ENCODE measurements at regions of chr1 and their contacts with region 1.

Region 1: DNA sequence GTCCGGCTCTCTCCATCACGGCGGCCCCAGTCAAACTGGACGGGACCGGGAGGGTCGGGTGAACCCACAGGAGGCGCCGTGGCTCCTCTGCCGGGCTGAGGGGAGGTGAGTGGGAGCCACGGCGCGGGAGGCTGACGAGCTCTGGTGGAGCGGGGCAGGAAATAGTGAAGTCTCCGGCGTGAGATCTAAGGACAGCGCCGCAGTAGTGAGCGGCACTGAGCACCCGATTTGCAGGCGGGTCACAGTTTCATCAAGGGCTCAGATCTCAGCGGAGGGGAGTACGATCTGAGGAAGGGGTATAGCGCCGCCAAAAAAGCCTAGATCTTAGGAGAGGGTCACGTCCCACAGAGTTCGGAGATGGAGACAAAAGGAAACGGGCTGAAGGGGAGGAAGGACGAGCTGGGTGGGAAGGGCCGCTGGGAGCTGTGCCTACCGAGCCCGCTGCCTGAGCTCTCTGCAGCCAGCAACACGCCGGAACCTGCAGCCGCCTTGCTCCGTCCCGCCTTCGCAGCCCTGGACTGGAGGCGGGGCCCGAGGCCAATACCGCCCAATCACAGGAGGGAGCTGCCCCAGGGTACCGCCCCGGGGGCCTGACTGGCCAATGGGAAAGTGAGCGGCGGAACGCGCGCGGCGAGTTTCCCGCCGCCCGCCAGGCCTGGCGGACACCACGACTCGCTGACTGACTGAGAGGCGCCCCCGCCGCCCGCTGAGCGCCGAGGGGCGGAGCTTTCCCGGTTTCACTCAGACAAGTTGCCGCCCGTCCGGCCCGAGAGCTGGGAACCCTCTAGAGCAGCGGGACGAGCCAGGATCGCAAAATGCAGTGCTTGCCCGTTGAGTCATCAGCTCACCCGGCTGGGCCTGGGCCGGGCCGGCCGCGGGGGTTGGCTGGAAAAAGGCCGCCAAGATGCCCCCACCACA is 1.9 kb downstream of the SFN start:
- DNase-seq: peak; percentile 96
- ATAC-seq: peak; percentile 97
- H3K4me3 Mint-ChIP-seq: peak overlapping the region; percentile 94
- H3K27ac Mint-ChIP-seq: peak overlapping the region; percentile 97
- H3K4me1 Mint-ChIP-seq: peaks cover 40% of the 10 kb centered on the region
- H3K27me3 Mint-ChIP-seq: no peaks in the 10 kb centered on the region

Region 2: DNA sequence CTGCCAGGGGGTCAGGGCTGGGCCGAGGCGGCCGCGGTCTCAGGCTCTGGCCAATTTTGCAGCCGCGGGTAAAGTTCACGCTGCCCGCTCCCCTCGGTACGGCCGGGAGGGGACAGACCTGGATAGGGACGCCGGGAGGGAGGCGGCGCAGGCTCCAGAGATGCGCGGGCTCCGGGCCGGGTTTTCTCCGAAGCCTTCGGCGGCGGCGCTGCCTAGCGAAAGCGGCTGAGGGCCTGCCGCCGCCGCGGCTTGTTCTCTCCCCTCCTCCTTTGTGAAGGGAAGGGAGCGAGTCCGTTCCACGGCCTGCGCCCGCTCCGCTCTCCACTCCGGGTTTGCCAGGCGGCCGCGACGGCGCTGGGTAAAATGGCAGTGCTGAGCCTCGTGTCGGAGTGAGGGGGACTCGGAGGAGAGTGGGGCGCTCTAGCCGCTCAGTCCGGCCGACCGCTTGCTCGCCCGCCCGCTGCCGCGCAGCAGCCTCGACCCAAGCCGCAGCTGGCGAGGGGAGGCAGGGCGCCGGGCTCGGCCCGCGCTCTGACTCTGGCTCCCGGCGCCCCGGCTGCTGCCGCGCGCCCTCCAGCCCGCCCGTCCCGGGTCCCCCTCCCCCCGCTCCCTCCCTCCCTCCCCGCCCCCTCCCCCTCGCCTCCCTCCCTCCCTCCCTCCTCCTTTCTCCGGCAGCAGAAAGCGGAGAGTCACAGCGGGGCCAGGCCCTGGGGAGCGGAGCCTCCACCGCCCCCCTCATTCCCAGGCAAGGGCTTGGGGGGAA is 169.3 kb before region 1 on chr1 and contains the start of gene ARID1A:
- CTCF ChIA-PET with region 1: interaction called, 3 read pairs
- POLR2A ChIA-PET with region 1: interaction called, 12 read pairs
- DNase-seq: peak; percentile 96
- ATAC-seq: peak; percentile 61
- H3K4me3 Mint-ChIP-seq: peak within 1 kb of the TSS; percentile 88
- H3K27ac Mint-ChIP-seq: peak within 1 kb of the TSS; percentile 97
- H3K4me1 Mint-ChIP-seq: peaks cover 33% of the 10 kb centered on the region
- H3K27me3 Mint-ChIP-seq: no peaks in the 10 kb centered on the region
- total RNA-seq, gene ARID1A: 122 to 123 TPM

Region 3: GRCh38 chr1:26811057-26811456 is 53.8 kb before region 1 on chr1:
- CTCF ChIA-PET with region 1: interaction called, 11 read pairs
- POLR2A ChIA-PET with region 1: interaction called, 8 read pairs
- DNase-seq: no peak
- ATAC-seq: no peak
- H3K4me3 Mint-ChIP-seq: no peak overlapping the region
- H3K27ac Mint-ChIP-seq: peak overlapping the region; percentile 74
- H3K4me1 Mint-ChIP-seq: peaks cover 21% of the 10 kb centered on the region
- H3K27me3 Mint-ChIP-seq: no peaks in the 10 kb centered on the region

Region 4: DNA sequence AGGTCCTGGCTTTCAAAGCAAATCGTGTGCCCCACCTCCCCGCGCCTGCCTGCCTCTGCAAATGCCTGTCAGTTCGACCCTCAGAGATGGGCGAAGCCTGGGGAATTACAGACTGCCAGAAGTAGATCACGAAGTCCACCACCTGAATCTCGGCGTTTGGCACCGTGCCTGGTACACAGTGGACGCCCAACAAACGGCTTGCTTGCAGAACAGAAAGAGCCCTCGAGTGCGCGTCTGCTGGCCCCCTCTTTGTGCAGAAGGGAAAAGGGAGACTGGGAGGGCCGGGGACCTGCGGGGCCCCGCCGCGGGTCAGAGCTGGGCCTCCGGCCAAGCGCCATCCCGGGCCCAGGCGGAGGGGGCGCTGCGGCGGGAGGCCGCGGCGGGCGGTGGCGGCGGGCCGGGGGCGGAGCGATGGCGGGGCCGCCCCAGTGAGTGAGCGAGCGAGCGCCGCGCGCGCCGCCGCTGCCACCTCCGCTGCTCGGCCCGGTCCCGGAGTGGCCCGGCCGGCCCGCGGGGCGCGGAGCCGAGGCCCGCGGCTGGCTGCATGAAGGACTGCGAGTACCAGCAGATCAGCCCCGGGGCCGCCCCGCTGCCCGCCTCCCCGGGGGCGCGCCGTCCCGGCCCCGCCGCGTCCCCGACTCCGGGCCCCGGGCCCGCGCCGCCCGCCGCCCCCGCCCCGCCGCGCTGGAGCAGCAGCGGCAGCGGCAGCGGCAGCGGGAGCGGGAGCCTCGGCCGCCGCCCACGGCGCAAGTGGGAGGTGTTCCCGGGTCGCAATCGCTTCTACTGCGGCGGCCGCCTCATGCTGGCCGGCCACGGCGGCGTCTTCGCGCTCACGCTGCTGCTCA is 38.4 kb before region 1 on chr1 and contains the start of gene ZDHHC18:
- CTCF ChIA-PET with region 1: interaction called, 27 read pairs
- POLR2A ChIA-PET with region 1: interaction called, 33 read pairs
- DNase-seq: peak; percentile 70
- ATAC-seq: peak; percentile 91
- H3K4me3 Mint-ChIP-seq: peak within 1 kb of the TSS; percentile 95
- H3K27ac Mint-ChIP-seq: peak within 1 kb of the TSS; percentile 92
- H3K4me1 Mint-ChIP-seq: peaks cover 55% of the 10 kb centered on the region
- H3K27me3 Mint-ChIP-seq: no peaks in the 10 kb centered on the region
- total RNA-seq, gene ZDHHC18: 47.6 to 50.9 TPM

Region 5: DNA sequence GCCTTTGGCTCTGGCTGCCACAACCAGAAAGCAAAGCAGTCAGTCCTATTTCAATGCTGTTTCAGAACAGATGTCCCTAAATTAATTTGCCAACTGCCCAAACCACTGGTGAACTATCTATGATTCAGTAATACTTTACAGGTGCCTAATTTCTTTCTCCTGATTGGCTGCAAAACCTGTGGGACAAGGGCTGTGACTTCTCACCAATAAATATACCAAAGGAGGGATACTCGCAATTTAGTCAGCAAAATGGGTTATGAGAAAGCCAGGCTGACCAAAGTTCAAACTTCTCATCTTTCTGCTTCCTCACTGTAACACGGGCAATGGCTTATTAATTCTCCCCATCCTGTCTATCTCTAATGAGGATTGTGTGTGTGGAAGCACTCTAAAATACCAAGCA is 12.5 kb after region 1 on chr1:
- CTCF ChIA-PET with region 1: interaction called, 25 read pairs
- POLR2A ChIA-PET with region 1: interaction called, 15 read pairs
- DNase-seq: no peak
- ATAC-seq: no peak
- H3K4me3 Mint-ChIP-seq: no peak overlapping the region
- H3K27ac Mint-ChIP-seq: no peak overlapping the region
- H3K4me1 Mint-ChIP-seq: no peaks in the 10 kb centered on the region
- H3K27me3 Mint-ChIP-seq: no peaks in the 10 kb centered on the region

Region 6: DNA sequence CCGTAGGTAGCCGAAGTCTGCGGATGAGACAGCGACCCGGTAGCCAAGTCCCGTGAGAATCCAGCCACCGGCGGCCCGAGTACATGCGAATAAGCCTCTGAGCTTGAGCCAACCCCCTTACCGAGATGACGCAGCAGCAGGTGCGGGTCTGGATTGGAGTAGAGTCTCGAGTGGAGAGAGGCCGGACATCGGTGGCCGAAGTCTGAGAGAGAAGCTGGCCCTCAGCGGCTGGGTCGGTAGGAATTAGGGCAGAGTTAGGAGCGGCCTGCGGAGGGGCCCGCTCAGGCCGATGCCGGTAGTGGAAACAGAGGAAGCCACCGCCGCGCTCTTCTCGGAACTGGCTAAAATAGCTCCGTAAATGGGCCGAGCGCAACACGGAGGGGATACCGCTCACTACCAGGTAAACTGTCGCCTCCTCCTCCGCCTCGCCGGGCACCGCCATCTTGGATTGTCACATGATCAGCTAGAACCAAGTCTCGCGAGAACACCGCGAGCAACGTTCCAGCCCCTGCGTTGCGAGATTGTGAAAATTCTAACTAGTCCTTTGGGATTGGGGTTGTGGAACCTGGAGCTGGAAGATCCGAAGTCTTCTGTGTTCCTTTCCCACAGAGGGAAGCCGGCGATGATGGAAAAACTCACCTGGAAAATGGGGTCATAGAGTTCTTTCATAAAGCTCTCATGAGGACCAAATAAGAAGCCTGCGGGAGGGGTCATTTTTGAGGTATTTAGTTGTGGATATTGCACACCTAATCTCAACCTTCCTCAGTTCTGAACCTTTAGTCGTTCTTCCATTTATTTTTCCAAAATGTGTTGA is 35.3 kb after region 1 on chr1 and contains the start of gene GPATCH3:
- CTCF ChIA-PET with region 1: interaction called, 3 read pairs
- POLR2A ChIA-PET with region 1: interaction called, 11 read pairs
- DNase-seq: peak; percentile 94
- ATAC-seq: peak; percentile 94
- H3K4me3 Mint-ChIP-seq: peak within 1 kb of the TSS; percentile 78
- H3K27ac Mint-ChIP-seq: peak within 1 kb of the TSS; percentile 95
- H3K4me1 Mint-ChIP-seq: peaks cover 27% of the 10 kb centered on the region
- H3K27me3 Mint-ChIP-seq: no peaks in the 10 kb centered on the region
- total RNA-seq, gene GPATCH3: 14.9 to 16.4 TPM

Measured in activated CD8-positive, alpha-beta T cell treated with anti-CD3 and anti-CD28 coated beads, Interleukin-2, amount 10 ng/mL, durations not matched to agents 7 days and 5 days (primary cell).